ENCODE measurements at regions of chrX and their contacts with region 1.

Region 1: GRCh38 chrX:70433848-70434351 is 10.7 kb upstream of the DLG3 start:
- DNase-seq: peak; percentile 83
- H3K4me3 Mint-ChIP-seq: peak overlapping the region; percentile 88
- H3K27ac Mint-ChIP-seq: peak overlapping the region; percentile 78
- H3K4me1 Mint-ChIP-seq: peaks cover 8% of the 10 kb centered on the region
- H3K27me3 Mint-ChIP-seq: peaks cover 14% of the 10 kb centered on the region
- CTCF ChIP-seq: peak; percentile 67

Region 2: GRCh38 chrX:70422851-70423341 is 11.0 kb before region 1 on chrX and contains the start of gene GDPD2:
- CTCF ChIA-PET with region 1: interaction called, 15 read pairs
- intact Hi-C with region 1: no loop called
- DNase-seq: peak; percentile 60
- H3K4me3 Mint-ChIP-seq: peak within 1 kb of the TSS; percentile 41
- H3K27ac Mint-ChIP-seq: no peak within 1 kb of the TSS
- H3K4me1 Mint-ChIP-seq: peaks cover 5% of the 10 kb centered on the region
- H3K27me3 Mint-ChIP-seq: no peaks in the 10 kb centered on the region
- CTCF ChIP-seq: peak; percentile 33
- total RNA-seq, gene GDPD2: not detected in 2 replicates

Region 3: DNA sequence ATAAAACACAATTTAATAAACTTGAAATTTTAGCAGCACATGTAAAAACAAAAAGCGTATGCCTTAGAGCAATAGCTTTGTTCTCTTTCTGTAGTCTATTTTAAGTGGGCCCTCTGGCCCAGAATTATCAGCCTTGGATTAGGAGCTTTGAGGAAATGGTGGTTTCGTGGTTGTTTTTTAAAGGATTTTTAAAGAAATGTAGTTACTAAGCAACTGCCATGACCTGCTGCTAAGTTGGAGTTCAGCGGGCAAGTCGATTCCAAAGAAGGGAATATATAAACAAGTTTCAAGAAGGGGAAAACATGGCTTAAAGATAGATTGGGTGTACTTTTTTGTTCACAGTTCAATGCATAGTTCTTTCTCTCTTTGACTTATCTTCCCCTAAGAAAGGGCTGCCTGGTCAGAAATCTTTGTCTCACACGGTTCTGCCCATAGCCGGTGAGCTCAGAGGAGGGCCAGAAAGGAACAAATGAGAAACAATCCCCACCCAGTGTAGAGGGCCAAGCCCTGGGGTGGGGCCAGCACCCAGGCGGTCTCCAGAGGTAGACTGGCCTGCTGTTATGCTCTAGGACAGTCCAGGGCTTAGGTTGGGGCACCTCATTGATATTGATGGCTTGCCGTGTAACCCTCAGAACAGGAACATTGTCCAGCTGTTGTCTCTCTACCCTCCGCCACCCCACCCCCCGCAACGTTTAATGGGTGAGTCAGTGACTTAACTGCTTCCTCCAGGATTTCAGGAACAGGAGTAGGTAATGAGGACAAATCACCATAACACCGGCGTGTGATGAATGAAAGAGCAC is 43.2 kb after region 1 on chrX:
- CTCF ChIA-PET with region 1: interaction called, 3 read pairs
- intact Hi-C with region 1: loop called (anchors 5 kb)
- DNase-seq: peak; percentile 83
- H3K4me3 Mint-ChIP-seq: peak overlapping the region; percentile 56
- H3K27ac Mint-ChIP-seq: peak overlapping the region; percentile 96
- H3K4me1 Mint-ChIP-seq: peaks cover 66% of the 10 kb centered on the region
- H3K27me3 Mint-ChIP-seq: no peaks in the 10 kb centered on the region
- CTCF ChIP-seq: no peak